ENCODE measurements at regions of chr11 and their contacts with region 1.

Region 1: DNA sequence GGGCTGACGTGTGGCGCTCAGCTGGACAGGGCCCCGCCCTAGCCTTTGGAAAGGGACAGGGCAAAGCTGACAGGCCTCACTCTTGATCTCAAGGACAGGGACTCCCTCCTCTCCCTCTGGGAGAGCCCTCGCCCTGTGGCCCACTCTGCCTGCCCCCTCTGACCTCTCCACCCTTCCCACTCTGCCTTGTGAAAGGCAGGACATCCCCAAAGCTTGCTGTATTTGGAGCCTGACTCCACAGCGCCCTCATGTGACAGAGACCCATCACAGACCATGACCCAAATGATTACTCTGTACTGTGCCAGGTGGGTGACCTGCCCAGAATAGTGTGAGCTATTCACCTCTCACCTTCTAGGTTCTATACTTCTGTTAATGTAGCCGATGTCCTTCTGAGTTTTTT is 18.8 kb downstream of the P2RY2 start:
- DNase-seq: peak; percentile 83
- ATAC-seq: peak; percentile 94
- H3K4me3 Mint-ChIP-seq: no peak overlapping the region
- H3K27ac Mint-ChIP-seq: no peak overlapping the region
- H3K4me1 Mint-ChIP-seq: 0 out of 2 replicates have a peak, but pooled peaks cover 4% of the 10 kb centered on the region
- H3K27me3 Mint-ChIP-seq: no peaks in the 10 kb centered on the region
- CTCF ChIP-seq: peak; percentile 78

Region 2: DNA sequence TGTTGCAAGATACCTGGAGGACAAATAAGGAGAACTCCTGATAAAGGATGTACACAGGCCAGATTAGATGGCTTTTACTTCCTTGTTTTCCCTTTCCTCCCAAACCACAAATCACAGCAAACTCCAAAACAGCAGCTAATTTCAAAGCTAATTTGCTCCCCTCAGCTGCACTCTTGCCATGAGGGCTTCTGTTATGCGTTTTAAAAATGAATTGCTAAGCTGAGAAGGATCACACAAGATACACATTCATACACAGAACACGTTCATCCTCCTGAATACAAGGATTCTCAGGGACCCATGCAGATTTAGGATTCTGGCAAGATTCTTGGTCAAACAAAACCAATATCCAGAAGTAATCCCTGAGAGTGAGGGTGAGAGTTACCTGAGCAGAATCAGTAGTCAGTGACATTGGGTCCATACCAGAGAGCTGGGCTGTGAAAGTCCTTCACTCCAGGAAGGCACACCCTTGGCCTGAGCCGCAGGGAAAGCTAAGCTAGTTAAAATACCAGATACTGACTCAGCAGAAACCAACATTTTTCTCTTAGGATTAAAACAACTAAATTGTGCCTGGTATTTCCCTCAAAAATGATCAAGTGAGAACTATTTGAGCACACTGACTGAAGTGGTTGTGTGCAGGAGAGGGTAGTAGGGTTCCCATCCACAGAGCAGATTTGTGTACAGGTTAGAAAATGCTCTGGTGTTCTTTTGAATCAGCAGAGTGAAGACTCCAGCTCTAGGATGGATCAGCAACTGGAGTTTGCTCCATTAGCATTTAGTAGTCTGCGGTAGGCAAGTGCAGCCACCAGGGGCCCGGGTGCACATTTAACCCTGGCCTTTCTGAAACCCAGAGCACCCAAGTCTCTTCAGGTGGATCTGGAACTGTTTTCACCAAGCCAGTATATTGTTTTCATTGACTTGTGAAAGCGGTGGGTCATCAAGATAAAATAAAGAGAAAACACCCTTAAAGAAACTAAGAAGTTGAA is 702.0 kb before region 1 on chr11:
- CTCF ChIA-PET with region 1: no interaction called
- POLR2A ChIA-PET with region 1: no interaction called
- DNase-seq: peak; percentile 45
- ATAC-seq: peak; percentile 95
- H3K4me3 Mint-ChIP-seq: peak overlapping the region; percentile 7; the same call in 1 of the 2 replicates
- H3K27ac Mint-ChIP-seq: peak overlapping the region; percentile 75
- H3K4me1 Mint-ChIP-seq: peaks cover 28% of the 10 kb centered on the region
- H3K27me3 Mint-ChIP-seq: peaks cover 10% of the 10 kb centered on the region; the same call in 1 of the 2 replicates
- CTCF ChIP-seq: no peak

Region 3: DNA sequence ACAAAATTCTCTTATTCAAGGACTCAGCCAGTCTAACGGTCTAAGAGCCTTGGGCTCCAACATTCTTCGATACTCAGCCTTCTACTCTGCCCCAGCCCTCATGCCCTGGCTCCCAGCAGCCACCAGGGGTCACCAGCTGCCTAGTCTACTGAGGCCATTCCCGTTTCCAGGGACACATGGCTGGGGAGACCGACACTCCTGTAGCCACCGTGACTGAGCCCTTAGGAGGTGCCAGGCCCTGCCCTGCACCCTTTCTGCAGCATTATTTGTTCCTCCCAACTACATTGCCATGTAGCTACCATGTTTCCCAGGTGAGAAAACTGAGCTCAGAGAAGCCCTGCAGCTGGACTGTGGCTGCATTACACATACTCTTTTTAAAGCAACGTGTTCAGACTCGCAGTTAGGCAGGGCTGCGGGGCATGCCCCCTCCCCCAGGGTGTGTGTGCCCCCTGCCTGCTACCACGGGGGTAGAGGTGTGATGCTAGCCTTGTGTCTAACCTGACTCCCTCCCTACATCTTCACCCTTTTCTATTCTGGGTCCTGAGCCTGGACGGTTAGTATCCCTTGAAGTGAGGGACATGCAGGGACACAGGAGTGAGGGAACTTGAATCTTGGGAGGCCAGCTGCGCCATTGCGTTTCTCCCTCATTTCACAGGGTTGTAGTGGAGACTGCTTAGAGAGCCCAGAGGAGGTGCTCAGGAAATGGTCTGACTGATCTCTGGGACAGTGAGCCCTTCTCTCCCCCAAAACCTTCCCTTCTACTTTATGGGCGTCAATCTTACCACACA is 405.1 kb before region 1 on chr11:
- CTCF ChIA-PET with region 1: interaction called, 11 read pairs
- POLR2A ChIA-PET with region 1: no interaction called
- DNase-seq: peak; percentile 90
- ATAC-seq: peak; percentile 97
- H3K4me3 Mint-ChIP-seq: no peak overlapping the region
- H3K27ac Mint-ChIP-seq: no peak overlapping the region
- H3K4me1 Mint-ChIP-seq: peaks cover 9% of the 10 kb centered on the region
- H3K27me3 Mint-ChIP-seq: peaks cover 6% of the 10 kb centered on the region
- CTCF ChIP-seq: peak; percentile 59

Region 4: GRCh38 chr11:73177778-73178577 is 58.9 kb before region 1 on chr11:
- CTCF ChIA-PET with region 1: interaction called, 129 read pairs
- POLR2A ChIA-PET with region 1: no interaction called
- DNase-seq: peak; percentile 83
- ATAC-seq: peak; percentile 97
- H3K4me3 Mint-ChIP-seq: no peak overlapping the region
- H3K27ac Mint-ChIP-seq: no peak overlapping the region
- H3K4me1 Mint-ChIP-seq: no peaks in the 10 kb centered on the region
- H3K27me3 Mint-ChIP-seq: no peaks in the 10 kb centered on the region; the same call in 1 of the 2 replicates
- CTCF ChIP-seq: peak; percentile 66

Region 5: DNA sequence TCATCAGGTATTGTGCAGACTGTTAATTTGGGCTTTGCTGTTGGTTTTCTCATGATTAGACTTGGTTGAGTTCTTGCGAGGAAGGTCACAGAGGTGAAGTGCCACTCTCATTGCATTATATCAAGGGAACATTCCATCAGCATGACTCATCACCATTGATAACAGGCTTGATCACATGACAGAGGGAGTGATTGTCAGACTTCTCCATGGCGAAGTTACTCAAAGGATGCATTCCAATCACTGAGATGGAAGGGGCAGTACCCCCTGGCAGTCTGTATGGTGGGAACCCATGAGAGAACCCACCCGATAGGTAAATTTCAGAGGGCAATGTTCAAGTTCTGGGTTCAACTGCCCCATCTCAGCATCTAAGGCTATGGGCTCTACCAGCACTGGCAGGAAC is 38.2 kb before region 1 on chr11:
- CTCF ChIA-PET with region 1: interaction called, 20 read pairs
- POLR2A ChIA-PET with region 1: no interaction called
- DNase-seq: peak; percentile 4
- ATAC-seq: no peak
- H3K4me3 Mint-ChIP-seq: no peak overlapping the region
- H3K27ac Mint-ChIP-seq: no peak overlapping the region
- H3K4me1 Mint-ChIP-seq: peaks cover 27% of the 10 kb centered on the region
- H3K27me3 Mint-ChIP-seq: no peaks in the 10 kb centered on the region; the same call in 1 of the 2 replicates
- CTCF ChIP-seq: no peak

Region 6: DNA sequence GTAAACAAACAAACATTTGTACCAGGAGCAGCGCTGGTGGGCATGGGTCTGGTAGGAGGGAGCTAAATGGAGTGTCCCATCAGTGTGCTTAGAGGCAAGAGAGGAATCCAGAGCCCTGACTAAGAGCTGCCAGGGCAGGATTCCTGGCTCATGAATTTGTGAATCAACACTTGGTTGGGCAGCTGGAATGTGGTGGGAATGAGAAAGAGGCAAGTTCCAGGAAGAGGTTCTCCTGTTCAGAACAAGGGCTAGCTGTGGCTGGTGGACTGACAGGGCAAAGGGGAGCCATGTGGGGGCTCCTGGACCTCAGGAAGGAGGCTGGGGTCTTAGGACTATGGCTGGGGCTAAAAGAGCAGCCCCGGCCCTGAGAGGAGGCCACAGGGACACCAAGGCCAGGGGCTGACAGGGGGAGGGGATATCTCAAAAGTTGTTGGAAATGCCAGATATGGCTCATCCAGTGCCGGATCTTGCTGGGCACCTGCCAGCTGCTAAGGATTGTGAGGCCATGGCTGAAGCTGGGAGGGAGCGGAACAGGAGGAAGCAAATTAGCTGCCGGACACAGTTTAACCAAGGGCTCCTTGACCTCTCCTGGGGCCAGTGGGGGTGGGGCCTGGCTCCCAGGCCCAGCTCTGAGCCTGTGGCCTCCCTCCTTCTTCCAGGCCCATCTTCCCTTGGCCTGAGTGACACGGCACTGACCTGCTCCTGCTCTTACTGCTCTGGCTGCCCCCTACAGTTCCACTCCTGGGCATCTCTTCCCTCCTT is 20.7 kb after region 1 on chr11:
- CTCF ChIA-PET with region 1: interaction called, 12 read pairs
- POLR2A ChIA-PET with region 1: no interaction called
- DNase-seq: no peak
- ATAC-seq: peak; percentile 48; the same call in 1 of the 2 replicates
- H3K4me3 Mint-ChIP-seq: no peak overlapping the region
- H3K27ac Mint-ChIP-seq: no peak overlapping the region
- H3K4me1 Mint-ChIP-seq: peaks cover 6% of the 10 kb centered on the region; the same call in 1 of the 2 replicates
- H3K27me3 Mint-ChIP-seq: peaks cover 3% of the 10 kb centered on the region
- CTCF ChIP-seq: no peak

Region 7: GRCh38 chr11:73288873-73289707 is 52.2 kb after region 1 on chr11:
- CTCF ChIA-PET with region 1: interaction called, 49 read pairs
- POLR2A ChIA-PET with region 1: no interaction called
- DNase-seq: peak; percentile 85
- ATAC-seq: peak; percentile 85
- H3K4me3 Mint-ChIP-seq: no peak overlapping the region
- H3K27ac Mint-ChIP-seq: no peak overlapping the region
- H3K4me1 Mint-ChIP-seq: peaks cover 9% of the 10 kb centered on the region
- H3K27me3 Mint-ChIP-seq: peaks cover 9% of the 10 kb centered on the region
- CTCF ChIP-seq: peak; percentile 81

Measured in WTC11 (cell line).